ENCODE measurements at regions of chr10 and their contacts with region 1.

Region 1: DNA sequence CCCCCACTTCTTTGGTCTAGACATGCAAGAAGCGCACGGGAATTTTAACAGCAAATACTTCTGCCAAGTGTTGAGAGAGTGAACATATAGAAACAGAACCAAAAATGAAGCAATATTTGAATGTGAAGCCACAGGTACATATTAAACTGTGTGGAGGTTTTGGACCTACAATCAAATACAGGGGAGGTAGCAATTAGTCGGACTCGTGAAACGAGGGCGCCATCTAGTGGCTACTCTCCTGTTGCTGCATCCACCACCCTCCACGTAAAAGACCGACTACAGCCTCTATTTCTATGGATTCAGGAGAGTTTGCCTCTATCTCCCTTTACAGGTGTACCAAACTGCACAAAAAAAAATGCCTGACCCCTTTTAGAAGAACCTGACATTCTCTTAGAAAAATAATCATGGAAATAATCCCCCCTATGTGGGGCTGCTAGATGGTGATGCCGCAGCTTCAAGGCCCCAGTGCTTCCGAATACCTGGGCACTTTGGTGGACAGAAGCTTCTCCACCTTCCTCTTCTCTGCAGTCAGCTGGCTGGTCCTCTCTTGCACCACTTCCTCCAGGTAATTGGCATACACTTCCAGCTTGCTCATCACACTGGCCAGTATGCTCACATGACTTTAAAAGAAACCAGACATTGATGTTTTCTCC is 31.7 kb downstream of the TECTB start:
- DNase-seq: peak; percentile 50
- H3K4me3 Mint-ChIP-seq: no peak overlapping the region
- H3K27ac Mint-ChIP-seq: no peak overlapping the region
- H3K4me1 Mint-ChIP-seq: peaks cover 4% of the 10 kb centered on the region
- H3K27me3 Mint-ChIP-seq: peaks cover 18% of the 10 kb centered on the region

Region 2: DNA sequence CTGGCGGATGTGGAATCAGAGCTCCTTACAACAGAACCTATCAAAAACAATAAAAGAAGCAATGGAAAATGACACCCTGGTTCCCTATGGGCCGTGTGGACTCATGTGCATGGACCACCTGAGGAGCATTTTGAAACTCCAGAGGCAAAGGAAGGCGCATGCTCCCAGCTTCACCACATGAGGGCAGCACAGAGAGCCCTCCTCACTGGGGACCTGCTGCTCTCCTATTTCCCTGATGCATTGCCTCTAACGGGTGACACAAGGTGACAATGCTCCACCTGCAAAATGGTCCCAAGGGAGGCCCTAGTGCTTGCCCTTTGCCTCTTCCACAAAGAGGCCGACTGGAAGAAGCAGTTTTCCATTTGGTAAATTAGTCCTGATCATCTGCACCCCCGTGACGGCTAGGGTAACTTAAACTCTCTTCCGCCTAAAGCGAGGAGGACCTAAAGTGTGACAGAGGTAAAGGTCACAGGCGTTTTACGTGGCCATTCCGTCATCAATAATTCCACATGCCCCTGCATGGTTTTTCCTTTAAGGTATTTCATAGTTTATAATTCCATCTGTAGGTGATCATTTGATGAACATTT is 199.1 kb before region 1 on chr10:
- intact Hi-C with region 1: loop called (anchors 1 kb)
- DNase-seq: peak; percentile 12
- H3K4me3 Mint-ChIP-seq: no peak overlapping the region
- H3K27ac Mint-ChIP-seq: no peak overlapping the region
- H3K4me1 Mint-ChIP-seq: no peaks in the 10 kb centered on the region
- H3K27me3 Mint-ChIP-seq: no peaks in the 10 kb centered on the region

Region 3: GRCh38 chr10:112183329-112184051 is 131.5 kb before region 1 on chr10 and contains the start of gene GPAM:
- intact Hi-C with region 1: loop called (anchors 1 kb)
- DNase-seq: peak; percentile 98
- H3K4me3 Mint-ChIP-seq: peak within 1 kb of the TSS; percentile 86
- H3K27ac Mint-ChIP-seq: peak within 1 kb of the TSS; percentile 93
- H3K4me1 Mint-ChIP-seq: peaks cover 34% of the 10 kb centered on the region
- H3K27me3 Mint-ChIP-seq: peaks cover 4% of the 10 kb centered on the region
- total RNA-seq, gene GPAM: 10.2 and 10.5 TPM in 2 replicates

Region 4: GRCh38 chr10:112295853-112296830 is 18.8 kb before region 1 on chr10:
- intact Hi-C with region 1: no loop called
- DNase-seq: no peak
- H3K4me3 Mint-ChIP-seq: no peak overlapping the region
- H3K27ac Mint-ChIP-seq: no peak overlapping the region
- H3K4me1 Mint-ChIP-seq: no peaks in the 10 kb centered on the region
- H3K27me3 Mint-ChIP-seq: peaks cover 7% of the 10 kb centered on the region

Region 5: DNA sequence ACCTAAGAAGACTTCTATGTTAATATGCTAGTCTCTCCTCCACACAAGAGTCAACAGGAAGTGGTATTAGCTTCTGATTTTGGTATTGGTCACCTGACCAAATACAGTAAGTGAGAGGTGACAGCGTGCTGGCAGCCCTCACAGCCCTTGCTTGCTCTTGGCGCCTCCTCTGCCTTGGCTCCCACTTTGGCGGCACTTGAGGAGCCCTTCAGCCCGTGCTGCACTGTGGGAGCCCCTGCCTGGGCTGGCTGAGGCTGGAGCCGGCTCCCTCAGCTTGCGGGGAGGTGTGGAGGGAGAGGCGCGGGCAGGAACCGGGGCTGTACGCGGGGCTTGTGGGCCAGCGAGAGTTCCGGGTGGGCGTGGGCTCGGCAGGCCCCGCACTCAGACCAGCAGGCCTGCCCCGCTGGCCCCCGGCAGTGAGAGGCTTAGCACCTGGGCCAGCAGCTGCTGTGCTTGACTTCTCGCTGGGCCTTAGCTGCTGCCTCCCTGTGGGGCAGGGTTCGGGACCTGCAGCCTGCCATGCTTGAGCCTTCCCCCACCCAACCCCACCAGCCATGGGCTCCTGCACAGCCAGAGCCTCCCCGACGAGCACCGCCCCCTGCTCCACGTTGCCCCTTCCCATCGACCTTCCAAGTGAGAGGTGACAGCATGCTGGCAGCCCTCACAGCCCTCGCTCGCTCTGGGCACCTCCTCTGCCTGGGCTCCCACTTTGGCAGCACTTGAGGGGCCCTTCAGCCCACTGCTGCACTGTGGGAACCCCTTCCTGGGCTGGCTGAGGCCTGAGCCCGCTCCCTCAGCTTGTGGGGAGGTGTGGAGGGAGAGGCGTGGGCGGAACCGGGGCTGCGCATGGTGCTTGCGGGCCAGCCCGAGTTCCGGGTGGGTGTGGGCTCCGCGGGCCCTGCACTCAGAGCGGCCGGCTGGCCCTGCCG is 54.8 kb after region 1 on chr10:
- intact Hi-C with region 1: no loop called
- DNase-seq: no peak
- H3K4me3 Mint-ChIP-seq: no peak overlapping the region
- H3K27ac Mint-ChIP-seq: no peak overlapping the region
- H3K4me1 Mint-ChIP-seq: peaks cover 9% of the 10 kb centered on the region
- H3K27me3 Mint-ChIP-seq: peaks cover 5% of the 10 kb centered on the region

Region 6: GRCh38 chr10:112434988-112435619 is 120.2 kb after region 1 on chr10:
- intact Hi-C with region 1: loop called (anchors 2 kb)
- DNase-seq: no peak
- H3K4me3 Mint-ChIP-seq: no peak overlapping the region
- H3K27ac Mint-ChIP-seq: no peak overlapping the region
- H3K4me1 Mint-ChIP-seq: peaks cover 5% of the 10 kb centered on the region
- H3K27me3 Mint-ChIP-seq: no peaks in the 10 kb centered on the region